ENCODE measurements at regions of chr17 and their contacts with region 1.

Region 1: GRCh38 chr17:2029911-2030778 is at the start of gene DPH1:
- DNase-seq: peak; percentile 93 to 95
- ATAC-seq: peak; percentile 92
- H3K4me3 ChIP-seq: peak within 1 kb of the TSS; percentile 67 to 69
- H3K27ac ChIP-seq: no peak within 1 kb of the TSS
- H3K4me1 ChIP-seq: no peaks in the 10 kb centered on the region
- H3K27me3 ChIP-seq: no peaks in the 10 kb centered on the region
- total RNA-seq, gene DPH1: 26.1 to 38.8 TPM

Region 2: DNA sequence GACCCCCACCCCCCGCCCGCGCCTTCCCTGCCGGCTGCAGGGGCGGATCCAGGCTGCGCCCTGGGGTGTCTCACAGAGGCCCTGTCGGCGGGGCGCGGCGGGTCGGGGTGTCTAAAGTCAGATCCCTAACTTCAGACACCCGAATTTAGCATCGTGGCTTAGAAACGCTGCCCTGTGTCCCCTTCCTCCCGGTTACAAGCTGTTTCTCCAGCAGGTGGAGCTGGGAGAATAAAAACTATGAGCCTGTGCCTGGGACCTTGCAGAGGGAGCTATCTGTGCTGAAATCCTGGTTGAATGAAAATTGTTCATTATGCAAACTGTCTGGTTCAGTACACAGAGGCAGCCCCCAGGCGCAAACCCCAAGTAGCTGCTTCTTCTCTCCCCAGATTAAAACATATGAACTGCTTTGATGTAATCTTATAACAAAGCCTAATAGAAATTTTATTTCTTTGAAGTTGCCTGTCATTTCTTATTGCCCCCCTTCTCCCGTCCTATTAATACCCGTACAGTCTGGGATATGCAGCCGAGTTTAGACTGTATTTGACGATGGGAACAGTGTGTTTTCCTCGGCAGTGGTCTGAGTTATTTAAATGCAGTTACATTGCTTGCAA is 121.3 kb before region 1 on chr17:
- intact Hi-C with region 1: loop called (anchors 1 to 2 kb)
- DNase-seq: peak in 1 of 2 donors; percentile 65
- ATAC-seq: peak; percentile 88
- H3K4me3 ChIP-seq: no peak overlapping the region
- H3K27ac ChIP-seq: no peak overlapping the region
- H3K4me1 ChIP-seq: no peaks in the 10 kb centered on the region
- H3K27me3 ChIP-seq: no peaks in the 10 kb centered on the region

Region 3: GRCh38 chr17:1989135-1989534 is 41.0 kb before region 1 on chr17:
- intact Hi-C with region 1: loop called in 1 of 2 experiments (anchors 5 kb)
- DNase-seq: peak; percentile 71 to 82
- ATAC-seq: peak; percentile 86
- H3K4me3 ChIP-seq: no peak overlapping the region
- H3K27ac ChIP-seq: no peak overlapping the region
- H3K4me1 ChIP-seq: no peaks in the 10 kb centered on the region
- H3K27me3 ChIP-seq: no peaks in the 10 kb centered on the region

Region 4: DNA sequence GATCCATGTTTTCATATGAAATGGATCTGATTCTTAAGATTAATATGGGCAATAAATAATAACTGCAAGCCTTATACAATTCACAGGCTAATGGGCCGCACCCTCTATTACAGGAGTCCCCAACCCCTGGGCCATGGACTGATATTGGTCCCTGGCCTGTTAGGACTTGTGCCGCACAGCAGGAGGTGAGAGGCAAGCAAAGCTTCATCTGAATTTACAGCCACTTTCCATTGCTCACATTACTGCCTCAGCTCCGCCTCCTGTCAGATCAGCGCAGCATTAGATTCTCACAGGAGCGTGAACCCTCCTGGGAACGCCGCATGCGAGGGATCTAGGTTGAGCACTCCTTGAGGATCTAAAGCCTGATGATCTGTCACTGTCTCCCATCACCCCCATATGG is 454.7 kb after region 1 on chr17:
- intact Hi-C with region 1: no loop called
- DNase-seq: no peak
- ATAC-seq: no peak
- H3K4me3 ChIP-seq: no peak overlapping the region
- H3K27ac ChIP-seq: no peak overlapping the region
- H3K4me1 ChIP-seq: peaks cover 2 to 8% of the 10 kb centered on the region in 2 donors
- H3K27me3 ChIP-seq: no peaks in the 10 kb centered on the region